ENCODE measurements at regions of chr3 and their contacts with region 1.

Region 1: DNA sequence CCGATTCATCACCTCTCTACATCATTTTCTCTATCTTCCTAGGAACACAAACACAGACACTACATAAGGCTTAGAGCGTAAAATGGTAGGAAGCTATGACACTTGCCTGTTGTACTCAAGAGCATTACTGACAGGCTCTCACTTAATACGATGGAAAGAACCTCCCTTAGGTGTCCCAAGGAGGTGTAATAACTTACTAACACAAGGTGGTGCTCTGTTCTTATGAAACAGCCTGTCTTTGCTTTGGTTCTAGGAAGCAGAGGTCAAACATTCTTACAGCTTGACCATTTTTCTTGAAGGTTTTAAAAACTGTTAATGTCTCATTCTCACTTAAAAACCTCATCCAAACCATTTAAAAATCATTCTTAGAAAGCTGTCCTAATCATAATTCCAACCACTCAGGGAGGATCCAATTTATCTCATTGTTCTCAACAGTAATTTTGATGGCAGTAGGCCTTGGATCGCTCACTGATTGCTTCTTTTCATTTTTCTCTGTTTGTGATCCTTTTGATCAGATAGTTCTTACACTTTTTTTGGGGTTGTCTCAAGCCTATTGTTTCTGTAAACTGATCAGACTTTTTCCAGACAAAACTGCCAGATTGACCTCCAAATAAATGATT is 317.8 kb upstream of the AGTR1 start:
- DNase-seq: peak; percentile 65
- ATAC-seq: peak; percentile 99
- H3K4me3 ChIP-seq: no peak overlapping the region
- H3K27ac ChIP-seq: no peak overlapping the region
- H3K4me1 ChIP-seq: no peaks in the 10 kb centered on the region
- H3K27me3 ChIP-seq: no peaks in the 10 kb centered on the region
- CTCF ChIP-seq: peak; percentile 49 to 66 (median 63); a peak in 5 of 6 replicates
- POLR2A ChIP-seq: no peak
- RAD21 ChIP-seq: peak; percentile 86

Region 2: DNA sequence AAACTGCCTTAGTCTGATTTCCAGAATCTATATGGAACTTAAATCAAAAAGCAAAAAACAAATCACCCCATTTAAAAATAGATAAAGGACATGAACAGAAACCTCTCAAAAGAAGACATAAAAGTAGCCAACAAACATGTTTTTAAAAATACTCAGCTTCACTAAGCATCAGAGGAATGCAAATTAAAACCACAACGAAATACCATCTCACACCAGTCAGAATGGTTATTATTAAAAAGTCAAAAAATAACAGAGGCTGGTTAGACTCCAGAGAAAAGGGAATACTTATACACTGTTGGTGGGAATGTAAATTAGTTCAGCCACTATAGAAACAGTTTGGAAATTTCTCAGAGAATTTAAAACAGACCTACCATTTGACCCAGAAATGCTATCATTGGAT is 1341.4 kb before region 1 on chr3:
- CTCF ChIA-PET with region 1: no interaction called
- POLR2A ChIA-PET with region 1: no interaction called
- RAD21 ChIA-PET with region 1: no interaction called
- intact Hi-C with region 1: no loop called
- DNase-seq: no peak
- ATAC-seq: no peak
- H3K4me3 ChIP-seq: no peak overlapping the region
- H3K27ac ChIP-seq: no peak overlapping the region
- H3K4me1 ChIP-seq: no peaks in the 10 kb centered on the region
- H3K27me3 ChIP-seq: no peaks in the 10 kb centered on the region
- CTCF ChIP-seq: no peak
- POLR2A ChIP-seq: no peak
- RAD21 ChIP-seq: no peak

Region 3: GRCh38 chr3:148459931-148460513 is 80.1 kb after region 1 on chr3:
- CTCF ChIA-PET with region 1: interaction called, 11 read pairs
- POLR2A ChIA-PET with region 1: no interaction called
- RAD21 ChIA-PET with region 1: interaction called in 1 of 2 experiments, 3 read pairs
- intact Hi-C with region 1: loop called (anchors 5 kb)
- DNase-seq: peak; percentile 6
- ATAC-seq: no peak
- H3K4me3 ChIP-seq: no peak overlapping the region
- H3K27ac ChIP-seq: no peak overlapping the region
- H3K4me1 ChIP-seq: no peaks in the 10 kb centered on the region
- H3K27me3 ChIP-seq: no peaks in the 10 kb centered on the region
- CTCF ChIP-seq: peak; percentile 31 to 67 (median 31); a peak in 4 of 6 replicates
- POLR2A ChIP-seq: no peak
- RAD21 ChIP-seq: peak; percentile 73

Region 4: DNA sequence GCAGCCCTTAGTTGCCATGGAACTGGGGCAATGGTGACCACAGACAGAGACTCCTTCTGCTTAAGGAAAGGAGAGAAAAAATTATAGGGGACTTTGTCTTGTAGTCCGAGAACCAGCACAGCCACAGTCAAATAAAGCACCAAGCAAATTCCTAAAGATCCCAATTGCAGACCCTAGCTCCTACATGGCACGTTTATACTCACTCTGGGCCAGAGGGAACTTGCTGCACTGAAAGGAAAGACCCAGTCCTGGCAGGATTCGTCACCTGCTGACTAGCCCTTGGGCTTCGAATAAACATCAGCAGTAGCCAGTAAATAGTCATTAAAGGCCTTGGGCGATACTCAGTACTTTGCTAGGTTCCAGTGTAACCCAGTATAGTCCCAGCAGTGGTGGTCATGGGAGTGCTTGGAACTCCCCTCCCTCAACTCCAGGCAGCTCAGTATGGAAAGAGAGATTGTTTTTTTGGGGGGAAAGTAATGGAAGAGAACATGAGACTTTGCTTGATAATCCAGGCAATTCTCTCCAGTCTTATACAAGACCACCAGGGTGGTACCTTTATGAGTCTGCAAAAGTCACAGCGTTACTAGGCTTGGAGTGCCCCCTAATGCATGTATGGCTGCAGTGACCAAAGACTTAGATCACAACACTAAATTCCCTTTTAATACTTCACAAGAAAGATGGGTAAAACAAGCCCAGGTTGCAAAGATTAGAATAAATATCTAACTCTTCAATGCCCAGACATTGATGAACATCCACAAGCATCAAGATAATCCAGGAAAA is 251.4 kb after region 1 on chr3:
- CTCF ChIA-PET with region 1: interaction called, 11 read pairs
- POLR2A ChIA-PET with region 1: no interaction called
- RAD21 ChIA-PET with region 1: no interaction called
- intact Hi-C with region 1: loop called (anchors 5 kb)
- DNase-seq: no peak
- ATAC-seq: no peak; the same call in 1 of the 2 replicates
- H3K4me3 ChIP-seq: no peak overlapping the region
- H3K27ac ChIP-seq: no peak overlapping the region
- H3K4me1 ChIP-seq: no peaks in the 10 kb centered on the region
- H3K27me3 ChIP-seq: no peaks in the 10 kb centered on the region
- CTCF ChIP-seq: peak; percentile 12 to 32 (median 16); a peak in 1 of 6 replicates
- POLR2A ChIP-seq: no peak
- RAD21 ChIP-seq: peak; percentile 59

Region 5: GRCh38 chr3:148718982-148719862 is 339.3 kb after region 1 on chr3:
- CTCF ChIA-PET with region 1: interaction called, 65 read pairs
- POLR2A ChIA-PET with region 1: no interaction called
- RAD21 ChIA-PET with region 1: interaction called, 8 to 10 read pairs
- intact Hi-C with region 1: loop called (anchors 1 kb)
- DNase-seq: peak; percentile 4
- ATAC-seq: peak; percentile 49; the same call in 1 of the 2 replicates
- H3K4me3 ChIP-seq: no peak overlapping the region
- H3K27ac ChIP-seq: no peak overlapping the region
- H3K4me1 ChIP-seq: 0 out of 4 replicates have a peak, but pooled peaks cover 0 to 4% of the 10 kb centered on the region in 2 experiments
- H3K27me3 ChIP-seq: no peaks in the 10 kb centered on the region
- CTCF ChIP-seq: peak; percentile 38 to 61 (median 44); a peak in 5 of 6 replicates
- POLR2A ChIP-seq: no peak
- RAD21 ChIP-seq: peak; percentile 67

Region 6: GRCh38 chr3:148727247-148727646 is 347.4 kb after region 1 on chr3:
- CTCF ChIA-PET with region 1: interaction called, 10 read pairs
- POLR2A ChIA-PET with region 1: no interaction called
- RAD21 ChIA-PET with region 1: no interaction called
- intact Hi-C with region 1: no loop called
- DNase-seq: peak; percentile 49
- ATAC-seq: peak; percentile 99
- H3K4me3 ChIP-seq: no peak overlapping the region
- H3K27ac ChIP-seq: no peak overlapping the region
- H3K4me1 ChIP-seq: 0 out of 4 replicates have a peak, but pooled peaks cover 0 to 4% of the 10 kb centered on the region in 2 experiments
- H3K27me3 ChIP-seq: no peaks in the 10 kb centered on the region
- CTCF ChIP-seq: peak; percentile 55 to 79 (median 73)
- POLR2A ChIP-seq: no peak
- RAD21 ChIP-seq: peak; percentile 79

Region 7: DNA sequence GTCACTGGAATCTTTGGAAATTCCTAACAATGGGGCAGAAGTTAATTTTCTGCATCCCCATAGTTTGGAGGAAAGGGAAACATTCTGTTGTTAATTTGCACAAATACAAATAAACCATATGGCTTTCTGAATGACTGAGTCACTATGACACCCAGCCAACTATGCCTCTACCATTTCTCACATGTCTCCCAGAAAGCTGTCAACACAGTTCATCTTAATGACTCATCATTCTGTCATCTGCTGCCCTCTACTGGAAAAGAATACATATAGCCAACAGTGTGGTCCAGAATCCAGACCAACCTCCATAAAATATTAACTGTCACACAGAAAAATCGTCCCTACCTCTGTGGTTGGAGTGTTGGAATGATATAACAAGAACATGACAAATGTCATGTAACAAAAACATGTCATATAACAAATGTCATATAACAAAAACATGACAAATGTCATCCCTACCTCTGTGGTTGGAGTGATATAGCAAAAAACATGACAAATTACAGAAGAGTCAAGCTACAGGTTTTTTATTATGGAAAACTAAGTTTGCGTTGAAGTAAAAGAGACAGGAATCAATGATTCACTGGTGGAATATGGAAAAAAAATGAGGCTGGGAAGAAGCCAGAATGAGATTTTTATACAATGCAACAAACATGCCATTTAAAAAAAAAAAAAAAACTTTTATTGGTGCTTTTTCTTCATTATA is 563.8 kb after region 1 on chr3:
- CTCF ChIA-PET with region 1: interaction called, 24 read pairs
- POLR2A ChIA-PET with region 1: no interaction called
- RAD21 ChIA-PET with region 1: no interaction called
- intact Hi-C with region 1: loop called (anchors 2 kb)
- DNase-seq: peak; percentile 66
- ATAC-seq: peak; percentile 80
- H3K4me3 ChIP-seq: no peak overlapping the region
- H3K27ac ChIP-seq: no peak overlapping the region
- H3K4me1 ChIP-seq: peaks cover 0 to 6% of the 10 kb centered on the region in 2 experiments; a peak in 2 of 4 replicates
- H3K27me3 ChIP-seq: no peaks in the 10 kb centered on the region
- CTCF ChIP-seq: peak; percentile 65 to 83 (median 80)
- POLR2A ChIP-seq: no peak
- RAD21 ChIP-seq: peak; percentile 90

Measured in HCT116 (cell line).